CD8-positive, alpha-beta memory T cell (primary cell): ENCODE measurements at regions of chr4 and their contacts with region 1.

Region 1: GRCh38 chr4:81040012-81040659 is 9.6 kb downstream of the BMP3 start:
- DNase-seq: peak in 2 of 5 donors; percentile 28 to 37
- H3K4me3 ChIP-seq: no peak overlapping the region
- H3K4me3 Mint-ChIP-seq: no peak overlapping the region
- H3K27ac ChIP-seq: no peak overlapping the region
- H3K27ac Mint-ChIP-seq: no peak overlapping the region
- H3K4me1 ChIP-seq: no peaks in the 10 kb centered on the region
- H3K4me1 Mint-ChIP-seq: no peaks in the 10 kb centered on the region
- H3K27me3 ChIP-seq: no peaks in the 10 kb centered on the region
- H3K27me3 Mint-ChIP-seq: peaks cover 0 to 31% of the 10 kb centered on the region in 2 donors

Region 2: DNA sequence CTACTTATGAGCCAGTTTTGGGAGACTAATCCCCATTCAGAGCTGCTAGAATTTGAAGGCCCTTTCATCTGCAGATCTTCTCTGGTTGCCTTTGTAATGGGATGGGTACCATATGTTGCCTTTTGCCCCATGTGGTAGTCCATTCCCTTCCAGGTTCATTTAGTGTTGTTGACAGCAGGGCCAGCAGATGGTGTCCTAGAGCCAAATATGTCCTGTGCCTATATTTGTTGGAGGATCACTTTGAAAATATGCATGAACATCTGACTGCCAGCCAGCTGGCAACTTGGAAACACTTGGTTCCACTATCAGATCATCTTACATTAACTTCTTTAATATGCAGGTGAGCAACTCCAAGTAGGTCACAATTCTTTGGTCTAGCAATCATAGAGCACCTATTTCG is 674.2 kb before region 1 on chr4:
- CTCF ChIA-PET with region 1: interaction called, 18 read pairs
- POLR2A ChIA-PET with region 1: no interaction called
- DNase-seq: peak; percentile 24 to 73 (median 43)
- H3K4me3 ChIP-seq: no peak overlapping the region
- H3K4me3 Mint-ChIP-seq: no peak overlapping the region
- H3K27ac ChIP-seq: no peak overlapping the region
- H3K27ac Mint-ChIP-seq: peak overlapping the region in 1 of 8 donors; percentile 1
- H3K4me1 ChIP-seq: peaks cover 5% of the 10 kb centered on the region
- H3K4me1 Mint-ChIP-seq: peaks cover 6 to 7% (median 6%) of the 10 kb centered on the region in 3 donors
- H3K27me3 ChIP-seq: no peaks in the 10 kb centered on the region
- H3K27me3 Mint-ChIP-seq: no peaks in the 10 kb centered on the region

Region 3: GRCh38 chr4:81052119-81053068 is 12.3 kb after region 1 on chr4:
- CTCF ChIA-PET with region 1: interaction called, 11 read pairs
- POLR2A ChIA-PET with region 1: no interaction called
- DNase-seq: peak; percentile 12 to 60 (median 21)
- H3K4me3 ChIP-seq: no peak overlapping the region
- H3K4me3 Mint-ChIP-seq: no peak overlapping the region
- H3K27ac ChIP-seq: no peak overlapping the region
- H3K27ac Mint-ChIP-seq: no peak overlapping the region
- H3K4me1 ChIP-seq: no peaks in the 10 kb centered on the region
- H3K4me1 Mint-ChIP-seq: no peaks in the 10 kb centered on the region
- H3K27me3 ChIP-seq: no peaks in the 10 kb centered on the region
- H3K27me3 Mint-ChIP-seq: peaks cover 0 to 24% of the 10 kb centered on the region in 2 donors

Region 4: GRCh38 chr4:81509191-81509590 is 469.1 kb after region 1 on chr4:
- CTCF ChIA-PET with region 1: no interaction called
- POLR2A ChIA-PET with region 1: no interaction called
- DNase-seq: no peak
- H3K4me3 ChIP-seq: no peak overlapping the region
- H3K4me3 Mint-ChIP-seq: no peak overlapping the region
- H3K27ac ChIP-seq: no peak overlapping the region
- H3K27ac Mint-ChIP-seq: no peak overlapping the region
- H3K4me1 ChIP-seq: peaks cover 18% of the 10 kb centered on the region
- H3K4me1 Mint-ChIP-seq: peaks cover 17 to 35% (median 26%) of the 10 kb centered on the region in 3 donors
- H3K27me3 ChIP-seq: no peaks in the 10 kb centered on the region
- H3K27me3 Mint-ChIP-seq: no peaks in the 10 kb centered on the region